ENCODE measurements at regions of chr5 and their contacts with region 1.

Region 1: GRCh38 chr5:97778451-97778850 is 595.4 kb upstream of the RIOK2 start:
- DNase-seq: no peak
- H3K4me3 Mint-ChIP-seq: no peak overlapping the region
- H3K27ac Mint-ChIP-seq: no peak overlapping the region
- H3K4me1 Mint-ChIP-seq: no peaks in the 10 kb centered on the region
- H3K27me3 Mint-ChIP-seq: no peaks in the 10 kb centered on the region

Region 2: GRCh38 chr5:97576956-97577355 is 201.5 kb before region 1 on chr5:
- intact Hi-C with region 1: no loop called
- DNase-seq: no peak
- H3K4me3 Mint-ChIP-seq: no peak overlapping the region
- H3K27ac Mint-ChIP-seq: no peak overlapping the region
- H3K4me1 Mint-ChIP-seq: no peaks in the 10 kb centered on the region
- H3K27me3 Mint-ChIP-seq: no peaks in the 10 kb centered on the region

Region 3: GRCh38 chr5:97764700-97765099 is 13.8 kb before region 1 on chr5:
- intact Hi-C with region 1: loop called (anchors 2 kb)
- DNase-seq: no peak
- H3K4me3 Mint-ChIP-seq: no peak overlapping the region
- H3K27ac Mint-ChIP-seq: no peak overlapping the region
- H3K4me1 Mint-ChIP-seq: no peaks in the 10 kb centered on the region
- H3K27me3 Mint-ChIP-seq: no peaks in the 10 kb centered on the region